Activated T-helper 2 cell treated with anti-CD3 and anti-CD28 coated beads, Interferon-gamma antibody, Interleukin-2, Interleukin-4, amounts not matched to agents 10 μg/mL and 5 μg/mL and 100 μg/mL, durations not matched to agents 14 hours and 24 hours and 36 hours (primary cell): ENCODE measurements at regions of chr5 and their contacts with region 1.

Region 1: GRCh38 chr5:77960863-77961396 is 184.8 kb upstream of the TBCA start:
- DNase-seq: no peak
- H3K4me3 Mint-ChIP-seq: no peak overlapping the region
- H3K27ac Mint-ChIP-seq: no peak overlapping the region
- H3K4me1 Mint-ChIP-seq: peaks cover 15% of the 10 kb centered on the region
- H3K27me3 Mint-ChIP-seq: peaks cover 41% of the 10 kb centered on the region

Region 2: DNA sequence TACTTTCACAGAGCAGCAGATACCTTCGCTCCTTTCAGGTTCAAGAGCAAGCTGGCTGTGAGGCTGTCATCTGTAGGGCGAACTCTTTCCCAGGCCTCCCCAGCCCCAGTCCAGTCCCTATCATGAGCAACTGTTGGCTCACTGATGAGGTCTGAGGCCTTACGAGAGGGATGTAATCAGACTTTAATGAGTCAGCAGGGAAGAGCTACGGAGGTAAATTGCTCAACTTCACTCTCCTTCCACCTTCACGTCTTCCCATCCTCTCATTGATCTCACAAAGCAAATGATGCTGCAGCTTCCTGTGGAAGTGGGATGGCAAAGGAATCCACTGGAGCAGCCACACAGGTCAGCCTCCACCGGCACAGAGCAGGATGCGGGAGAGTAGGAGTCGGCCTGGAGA is 54.1 kb before region 1 on chr5:
- intact Hi-C with region 1: no loop called
- DNase-seq: no peak
- H3K4me3 Mint-ChIP-seq: no peak overlapping the region
- H3K27ac Mint-ChIP-seq: no peak overlapping the region
- H3K4me1 Mint-ChIP-seq: no peaks in the 10 kb centered on the region
- H3K27me3 Mint-ChIP-seq: peaks cover 11% of the 10 kb centered on the region

Region 3: GRCh38 chr5:77972469-77973252 is 11.7 kb after region 1 on chr5:
- intact Hi-C with region 1: loop called (anchors 2 kb)
- DNase-seq: no peak
- H3K4me3 Mint-ChIP-seq: peak overlapping the region; percentile 56
- H3K27ac Mint-ChIP-seq: no peak overlapping the region
- H3K4me1 Mint-ChIP-seq: peaks cover 10% of the 10 kb centered on the region
- H3K27me3 Mint-ChIP-seq: peaks cover 75% of the 10 kb centered on the region